CD4-positive, alpha-beta T cell (primary cell): ENCODE measurements at regions of chr11 and their contacts with region 1.

Region 1: GRCh38 chr11:35082321-35083182 is 56.4 kb upstream of the CD44 start:
- DNase-seq: peak; percentile 74 to 96 (median 83)
- ATAC-seq: peak; percentile 77
- H3K4me3 ChIP-seq: peak overlapping the region; percentile 47
- H3K4me3 Mint-ChIP-seq: peak overlapping the region; percentile 83
- H3K27ac ChIP-seq: peak overlapping the region; percentile 95 to 99
- H3K27ac Mint-ChIP-seq: peak overlapping the region; percentile 98
- H3K4me1 ChIP-seq: peaks cover 84% of the 10 kb centered on the region
- H3K4me1 Mint-ChIP-seq: peaks cover 97% of the 10 kb centered on the region
- H3K27me3 ChIP-seq: no peaks in the 10 kb centered on the region
- H3K27me3 Mint-ChIP-seq: no peaks in the 10 kb centered on the region
- CTCF ChIP-seq: peak; percentile 17

Region 2: GRCh38 chr11:34997952-34998528 is 84.5 kb before region 1 on chr11:
- CTCF ChIA-PET with region 1: interaction called, 7 read pairs
- POLR2A ChIA-PET with region 1: no interaction called
- intact Hi-C with region 1: loop called (anchors 1 to 5 kb)
- DNase-seq: peak in 3 of 14 experiments; percentile 42 to 56 (median 55)
- ATAC-seq: peak; percentile 64
- H3K4me3 ChIP-seq: no peak overlapping the region
- H3K4me3 Mint-ChIP-seq: peak overlapping the region; percentile 39
- H3K27ac ChIP-seq: no peak overlapping the region
- H3K27ac Mint-ChIP-seq: peak overlapping the region; percentile 48
- H3K4me1 ChIP-seq: no peaks in the 10 kb centered on the region
- H3K4me1 Mint-ChIP-seq: peaks cover 37% of the 10 kb centered on the region
- H3K27me3 ChIP-seq: no peaks in the 10 kb centered on the region
- H3K27me3 Mint-ChIP-seq: no peaks in the 10 kb centered on the region
- CTCF ChIP-seq: peak; percentile 94

Region 3: GRCh38 chr11:35013514-35014233 is 68.9 kb before region 1 on chr11:
- CTCF ChIA-PET with region 1: no interaction called
- POLR2A ChIA-PET with region 1: interaction called, 5 read pairs
- intact Hi-C with region 1: loop called in 1 of 2 experiments (anchors 2 kb)
- DNase-seq: peak in 6 of 14 experiments; percentile 18 to 85 (median 53)
- ATAC-seq: peak; percentile 81
- H3K4me3 ChIP-seq: no peak overlapping the region
- H3K4me3 Mint-ChIP-seq: peak overlapping the region; percentile 36
- H3K27ac ChIP-seq: peak overlapping the region; percentile 46 to 80
- H3K27ac Mint-ChIP-seq: peak overlapping the region; percentile 88
- H3K4me1 ChIP-seq: peaks cover 28% of the 10 kb centered on the region
- H3K4me1 Mint-ChIP-seq: peaks cover 37% of the 10 kb centered on the region
- H3K27me3 ChIP-seq: no peaks in the 10 kb centered on the region
- H3K27me3 Mint-ChIP-seq: no peaks in the 10 kb centered on the region
- CTCF ChIP-seq: no peak

Region 4: DNA sequence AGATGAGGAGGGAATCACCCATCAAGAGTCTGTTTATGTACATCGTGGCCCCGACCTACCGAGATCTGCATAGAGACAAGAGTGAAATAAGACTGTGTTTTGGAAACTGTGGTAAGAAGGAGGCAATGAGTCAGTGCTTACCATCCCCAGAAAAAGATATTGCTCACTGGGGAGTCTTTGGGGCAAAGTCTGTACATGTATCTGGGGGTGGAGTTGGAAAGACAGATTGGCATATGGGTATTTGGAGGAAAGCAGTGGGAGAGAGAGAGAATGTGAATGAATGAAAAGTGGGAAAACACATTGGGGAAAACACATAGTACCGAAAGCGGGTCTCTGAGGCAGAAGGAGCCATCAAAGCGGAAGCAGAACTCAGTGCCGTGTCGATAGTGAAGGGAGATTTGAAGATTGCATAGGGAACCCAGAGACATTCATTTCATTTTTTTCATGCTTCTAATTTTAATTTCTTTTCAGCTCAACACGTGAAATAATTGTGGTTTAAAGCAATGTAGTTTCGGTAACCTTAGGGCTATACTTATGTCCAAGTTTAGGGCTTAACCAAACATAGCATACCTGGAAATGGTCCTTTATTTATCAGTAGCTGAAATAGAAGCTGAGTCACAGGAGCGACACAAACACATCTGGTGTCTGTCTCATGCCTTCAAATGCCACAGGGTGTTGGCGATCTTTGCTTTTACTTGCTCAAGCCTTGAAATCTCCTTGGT is 42.2 kb before region 1 on chr11:
- CTCF ChIA-PET with region 1: interaction called, 5 read pairs
- POLR2A ChIA-PET with region 1: interaction called, 12 read pairs
- intact Hi-C with region 1: loop called (anchors 1 to 5 kb)
- DNase-seq: peak; percentile 37 to 92 (median 57)
- ATAC-seq: peak; percentile 79
- H3K4me3 ChIP-seq: peak overlapping the region; percentile 55
- H3K4me3 Mint-ChIP-seq: peak overlapping the region; percentile 81
- H3K27ac ChIP-seq: peak overlapping the region; percentile 84 to 88
- H3K27ac Mint-ChIP-seq: peak overlapping the region; percentile 92
- H3K4me1 ChIP-seq: peaks cover 43% of the 10 kb centered on the region
- H3K4me1 Mint-ChIP-seq: peaks cover 72% of the 10 kb centered on the region
- H3K27me3 ChIP-seq: no peaks in the 10 kb centered on the region
- H3K27me3 Mint-ChIP-seq: no peaks in the 10 kb centered on the region
- CTCF ChIP-seq: no peak

Region 5: GRCh38 chr11:35047179-35047578 is 35.4 kb before region 1 on chr11:
- CTCF ChIA-PET with region 1: interaction called, 5 read pairs
- POLR2A ChIA-PET with region 1: interaction called, 15 read pairs
- intact Hi-C with region 1: loop called (anchors 1 to 2 kb)
- DNase-seq: peak; percentile 27 to 91 (median 46)
- ATAC-seq: peak; percentile 70
- H3K4me3 ChIP-seq: no peak overlapping the region
- H3K4me3 Mint-ChIP-seq: peak overlapping the region; percentile 83
- H3K27ac ChIP-seq: peak overlapping the region; percentile 93 to 96
- H3K27ac Mint-ChIP-seq: peak overlapping the region; percentile 92
- H3K4me1 ChIP-seq: peaks cover 83% of the 10 kb centered on the region
- H3K4me1 Mint-ChIP-seq: peaks cover 98% of the 10 kb centered on the region
- H3K27me3 ChIP-seq: no peaks in the 10 kb centered on the region
- H3K27me3 Mint-ChIP-seq: no peaks in the 10 kb centered on the region
- CTCF ChIP-seq: no peak

Region 6: DNA sequence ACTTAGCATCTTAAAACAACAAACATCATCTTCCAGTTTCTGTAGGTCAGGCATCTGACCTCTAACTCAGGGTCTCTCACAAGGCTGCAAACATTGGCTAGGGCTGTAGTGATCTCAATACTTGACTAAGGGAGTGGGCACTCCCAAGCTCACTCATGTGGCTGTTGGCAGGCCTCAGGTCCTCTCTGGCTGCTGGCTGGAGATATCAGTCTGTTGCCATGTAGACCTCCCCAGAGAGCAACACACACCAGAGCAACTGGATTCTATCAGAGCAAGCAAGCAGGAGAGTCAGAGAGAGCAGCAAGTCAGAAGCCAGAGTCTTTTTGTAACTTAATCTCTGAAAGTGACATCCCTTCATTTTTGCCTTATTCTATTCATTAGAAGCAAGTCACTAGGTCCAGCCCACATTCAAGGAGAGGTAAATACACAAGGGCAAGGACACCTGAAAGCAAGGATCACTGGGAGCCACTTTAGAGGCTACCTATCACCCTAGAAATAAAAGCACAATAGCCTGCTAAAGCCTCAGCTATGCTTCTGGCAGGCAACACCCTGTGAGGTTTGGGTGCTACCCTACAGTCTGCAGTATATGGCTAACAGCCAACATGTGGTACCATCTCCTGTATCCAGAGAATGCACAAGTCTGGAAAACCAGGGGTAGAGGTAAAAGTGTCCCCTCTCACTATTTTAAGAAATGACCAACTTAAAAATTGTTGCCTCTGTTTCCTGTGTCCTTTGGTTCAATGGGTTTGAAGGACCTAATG is 22.9 kb after region 1 on chr11:
- CTCF ChIA-PET with region 1: no interaction called
- POLR2A ChIA-PET with region 1: interaction called, 3 read pairs
- intact Hi-C with region 1: loop called in 1 of 2 experiments (anchors 2 kb)
- DNase-seq: no peak
- ATAC-seq: no peak
- H3K4me3 ChIP-seq: no peak overlapping the region
- H3K4me3 Mint-ChIP-seq: no peak overlapping the region
- H3K27ac ChIP-seq: no peak overlapping the region
- H3K27ac Mint-ChIP-seq: peak overlapping the region; percentile 28
- H3K4me1 ChIP-seq: peaks cover 32% of the 10 kb centered on the region
- H3K4me1 Mint-ChIP-seq: peaks cover 66% of the 10 kb centered on the region
- H3K27me3 ChIP-seq: no peaks in the 10 kb centered on the region
- H3K27me3 Mint-ChIP-seq: no peaks in the 10 kb centered on the region
- CTCF ChIP-seq: no peak

Region 7: GRCh38 chr11:35122308-35122707 is 39.8 kb after region 1 on chr11:
- CTCF ChIA-PET with region 1: no interaction called
- POLR2A ChIA-PET with region 1: interaction called, 7 read pairs
- intact Hi-C with region 1: loop called in 1 of 2 experiments (anchors 5 kb)
- DNase-seq: peak in 4 of 14 experiments; percentile 33 to 60 (median 58)
- ATAC-seq: peak; percentile 78
- H3K4me3 ChIP-seq: no peak overlapping the region
- H3K4me3 Mint-ChIP-seq: peak overlapping the region; percentile 13
- H3K27ac ChIP-seq: peak overlapping the region; percentile 31 to 47
- H3K27ac Mint-ChIP-seq: peak overlapping the region; percentile 84
- H3K4me1 ChIP-seq: peaks cover 42% of the 10 kb centered on the region
- H3K4me1 Mint-ChIP-seq: peaks cover 89% of the 10 kb centered on the region
- H3K27me3 ChIP-seq: no peaks in the 10 kb centered on the region
- H3K27me3 Mint-ChIP-seq: no peaks in the 10 kb centered on the region
- CTCF ChIP-seq: no peak